ENCODE measurements at regions of chr15 and their contacts with region 1.

Region 1: GRCh38 chr15:60916679-60917460 is 312.2 kb downstream of the RORA start:
- DNase-seq: peak; percentile 92
- ATAC-seq: peak; percentile 93

Region 2: GRCh38 chr15:60507596-60508424 is 409.1 kb before region 1 on chr15:
- intact Hi-C with region 1: loop called (anchors 10 kb)
- DNase-seq: no peak
- ATAC-seq: peak; percentile 87

Region 3: DNA sequence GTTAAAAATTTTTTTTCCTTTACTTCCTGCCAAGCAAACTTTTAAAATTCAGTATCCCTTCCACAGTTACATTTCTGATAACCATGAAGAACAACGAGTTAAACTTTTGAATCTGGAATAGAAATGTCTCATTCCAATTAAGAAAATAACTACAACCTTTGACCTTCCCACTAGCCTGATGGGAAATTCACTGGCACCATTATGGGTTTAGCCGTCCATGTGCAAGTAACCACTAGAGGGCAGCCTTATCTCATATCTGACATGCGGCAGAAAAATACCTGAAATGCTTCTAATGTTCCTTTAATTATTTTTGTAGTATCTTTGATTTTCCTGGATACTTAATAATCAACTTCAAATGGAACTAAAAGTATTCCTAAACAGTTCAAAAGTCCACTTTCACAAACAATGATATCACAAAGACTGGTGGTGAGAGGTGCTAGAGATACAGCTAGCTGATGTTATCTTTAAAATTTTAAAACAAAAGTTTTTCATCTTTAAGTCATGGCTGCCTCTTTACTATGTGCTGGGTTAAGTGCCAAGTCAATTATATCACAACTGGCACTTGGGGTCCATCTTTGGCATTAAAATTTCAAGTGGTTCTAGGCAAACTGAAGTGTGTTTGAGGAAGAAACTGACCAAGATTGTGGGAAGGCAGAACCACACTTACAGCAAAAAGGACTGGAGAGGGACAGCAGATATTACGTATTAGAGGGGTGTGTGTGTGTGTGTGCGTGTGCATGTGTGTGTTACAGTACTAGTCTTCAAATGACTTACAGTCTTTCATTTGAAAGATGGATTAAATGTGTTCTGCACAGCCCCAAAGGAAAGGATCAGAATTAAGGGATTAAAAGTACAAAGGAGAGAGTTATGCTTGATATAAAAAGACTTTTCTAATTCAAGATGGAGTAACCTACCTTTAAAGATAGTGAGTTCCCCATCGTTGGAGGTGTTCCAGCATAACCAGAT is 330.8 kb before region 1 on chr15:
- intact Hi-C with region 1: loop called (anchors 2 kb)
- DNase-seq: no peak
- ATAC-seq: peak; percentile 81

Region 4: DNA sequence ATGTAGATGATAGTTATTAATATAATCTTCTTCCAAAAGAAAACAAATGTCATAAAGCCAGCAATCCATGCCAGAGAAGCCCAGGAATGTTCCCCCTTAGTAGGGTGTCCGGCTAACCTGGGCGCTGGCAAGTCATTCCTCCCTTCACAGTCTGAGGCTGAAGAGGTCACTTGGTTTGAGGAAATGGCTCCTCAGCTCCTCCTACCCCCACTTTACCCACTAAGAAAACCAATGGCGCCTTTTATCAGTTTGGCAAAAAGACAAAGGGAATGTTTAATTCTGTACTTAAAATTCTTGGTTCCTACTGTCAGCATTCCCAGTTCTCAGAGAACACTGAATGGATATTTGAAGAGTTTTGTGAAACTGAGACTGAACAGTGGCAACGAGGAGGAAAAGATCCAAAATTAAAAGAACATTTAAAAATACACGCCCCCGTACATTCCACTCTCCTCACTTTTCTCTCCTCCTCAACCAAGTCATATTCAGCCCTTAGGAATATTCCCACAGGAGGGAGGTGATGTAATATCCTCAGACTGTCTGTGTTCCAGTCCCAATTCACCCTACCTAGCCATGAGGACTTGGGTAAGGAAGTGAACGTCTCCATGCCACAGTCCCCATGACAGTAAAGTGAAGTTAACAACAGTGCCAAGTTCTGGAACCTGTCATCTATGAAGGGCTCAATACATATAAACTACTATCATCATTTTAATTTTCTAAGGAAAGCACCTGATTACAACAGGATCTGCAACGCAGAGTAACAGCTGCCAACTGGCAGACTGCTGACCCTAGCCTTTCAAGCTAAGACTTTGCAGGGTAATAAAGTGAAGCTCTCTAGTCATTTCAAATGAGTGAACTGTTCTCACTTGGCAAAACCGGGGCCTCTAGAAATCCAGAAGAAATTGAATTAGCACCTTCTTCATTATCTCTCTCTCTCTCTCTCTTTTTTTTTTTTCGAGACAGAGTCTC is 203.5 kb before region 1 on chr15:
- intact Hi-C with region 1: no loop called
- DNase-seq: no peak
- ATAC-seq: peak; percentile 88

Measured in Right ventricle myocardium superior (tissue), 1 donor.